IMR-90 (cell line): ENCODE measurements at regions of chr12 and their contacts with region 1.

Region 1: GRCh38 chr12:1422604-1423315 is 171.6 kb downstream of the FBXL14 start:
- DNase-seq: no peak
- ATAC-seq: no peak
- H3K4me3 ChIP-seq: no peak overlapping the region
- H3K27ac ChIP-seq: no peak overlapping the region
- H3K4me1 ChIP-seq: peaks cover 3% of the 10 kb centered on the region; the same call in 1 of the 2 replicates
- H3K27me3 ChIP-seq: no peaks in the 10 kb centered on the region
- CTCF ChIP-seq: no peak
- POLR2A ChIP-seq: no peak
- RAD21 ChIP-seq: no peak

Region 2: DNA sequence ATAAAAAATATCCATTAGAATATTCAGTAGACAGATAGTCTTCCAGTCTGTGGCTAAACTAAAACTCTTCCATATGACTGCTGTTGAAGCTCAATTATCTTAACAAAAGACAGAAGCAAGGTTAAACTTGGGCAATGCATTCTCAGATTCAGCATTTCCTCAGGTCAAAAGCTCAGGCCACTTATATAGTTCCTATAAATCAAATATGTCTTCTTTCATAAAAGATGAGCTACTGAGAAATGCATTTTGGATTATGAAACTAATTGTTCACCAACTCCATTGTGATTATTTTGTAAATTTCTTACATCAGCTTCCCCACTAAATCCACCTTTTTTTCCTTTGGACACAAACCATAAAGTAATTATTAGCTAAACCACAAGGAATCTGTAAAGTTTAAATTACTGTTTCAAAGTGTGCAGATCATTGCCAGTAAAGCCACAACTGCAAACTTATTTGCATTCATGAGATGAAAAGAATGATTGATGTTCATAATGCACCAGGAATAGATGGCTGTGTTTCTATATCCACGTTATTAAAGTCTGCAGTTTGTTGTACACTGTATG is 52.7 kb before region 1 on chr12:
- CTCF ChIA-PET with region 1: interaction called, 10 read pairs
- POLR2A ChIA-PET with region 1: no interaction called
- dilution Hi-C with region 1: no loop called
- in situ Hi-C with region 1: no loop called
- intact Hi-C with region 1: no loop called
- DNase-seq: no peak
- ATAC-seq: no peak
- H3K4me3 ChIP-seq: no peak overlapping the region
- H3K27ac ChIP-seq: no peak overlapping the region
- H3K4me1 ChIP-seq: peaks cover 2% of the 10 kb centered on the region
- H3K27me3 ChIP-seq: no peaks in the 10 kb centered on the region
- CTCF ChIP-seq: no peak
- POLR2A ChIP-seq: no peak
- RAD21 ChIP-seq: no peak

Region 3: GRCh38 chr12:1398673-1399072 is 24.1 kb before region 1 on chr12:
- CTCF ChIA-PET with region 1: no interaction called
- POLR2A ChIA-PET with region 1: interaction called, 13 read pairs
- dilution Hi-C with region 1: no loop called
- in situ Hi-C with region 1: no loop called
- intact Hi-C with region 1: no loop called
- DNase-seq: peak; percentile 67
- ATAC-seq: peak; percentile 57; the same call in 1 of the 2 replicates
- H3K4me3 ChIP-seq: no peak overlapping the region
- H3K27ac ChIP-seq: no peak overlapping the region
- H3K4me1 ChIP-seq: no peaks in the 10 kb centered on the region
- H3K27me3 ChIP-seq: no peaks in the 10 kb centered on the region
- CTCF ChIP-seq: peak; percentile 44
- POLR2A ChIP-seq: no peak
- RAD21 ChIP-seq: peak; percentile 65

Region 4: GRCh38 chr12:1463073-1463905 is 40.5 kb after region 1 on chr12:
- CTCF ChIA-PET with region 1: no interaction called
- POLR2A ChIA-PET with region 1: no interaction called
- dilution Hi-C with region 1: no loop called
- in situ Hi-C with region 1: no loop called
- intact Hi-C with region 1: no loop called
- DNase-seq: no peak
- ATAC-seq: no peak
- H3K4me3 ChIP-seq: no peak overlapping the region
- H3K27ac ChIP-seq: no peak overlapping the region
- H3K4me1 ChIP-seq: no peaks in the 10 kb centered on the region; the same call in 1 of the 2 replicates
- H3K27me3 ChIP-seq: no peaks in the 10 kb centered on the region
- CTCF ChIP-seq: no peak
- POLR2A ChIP-seq: no peak
- RAD21 ChIP-seq: no peak